RWPE1 (cell line): ENCODE measurements at regions of chr1 and their contacts with region 1.

Region 1: GRCh38 chr1:94045465-94046056 is 75.4 kb downstream of the ABCA4 start:
- DNase-seq: peak; percentile 95
- H3K27ac ChIP-seq: peak overlapping the region; percentile 69
- CTCF ChIP-seq: peak; percentile 81

Region 2: GRCh38 chr1:94061513-94062443 is 16.2 kb after region 1 on chr1:
- CTCF ChIA-PET with region 1: interaction called, 14 read pairs
- POLR2A ChIA-PET with region 1: no interaction called
- DNase-seq: peak; percentile 88
- H3K27ac ChIP-seq: no peak overlapping the region
- CTCF ChIP-seq: peak; percentile 77

Region 3: DNA sequence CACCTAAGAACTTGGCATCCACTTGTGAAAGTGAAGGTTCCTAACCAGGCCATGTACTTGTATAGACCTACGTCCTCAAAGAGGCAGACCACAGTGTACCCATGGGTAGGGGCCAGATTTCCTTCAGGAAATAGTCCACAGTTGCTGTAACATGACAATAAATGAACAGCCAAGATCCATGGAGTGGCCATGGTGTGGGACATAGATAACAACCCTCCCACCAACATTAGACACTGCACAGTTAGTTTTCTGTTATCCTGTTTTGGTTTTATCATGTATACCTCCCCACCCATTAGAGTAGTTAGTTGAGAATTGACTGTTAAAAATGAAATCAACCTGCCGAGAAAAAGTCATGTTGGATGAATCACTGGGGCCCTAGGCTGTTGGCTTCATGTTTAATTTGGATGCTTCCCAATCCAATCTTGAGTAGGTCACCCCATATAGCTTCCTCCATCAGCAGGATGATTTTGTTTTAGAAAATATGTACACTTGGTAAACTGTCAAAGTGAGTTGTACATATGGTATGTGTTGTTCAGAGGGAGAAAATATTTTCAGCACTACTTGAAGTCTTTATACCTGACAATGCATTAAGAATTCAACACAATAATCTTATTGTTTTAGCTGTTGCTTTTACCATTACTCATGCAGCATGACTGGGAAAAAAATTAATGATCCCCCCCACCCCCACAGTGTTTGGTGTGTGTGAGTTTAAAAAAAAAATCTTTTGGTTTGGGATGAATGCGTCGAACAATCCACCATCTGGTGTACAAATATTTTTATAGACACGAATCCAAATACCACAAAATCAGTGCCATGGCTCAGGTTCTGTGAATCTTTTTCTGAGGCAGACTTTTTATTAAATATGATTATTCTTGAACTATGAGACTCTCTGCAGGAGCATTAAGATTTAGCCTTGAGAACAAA is 280.1 kb after region 1 on chr1:
- CTCF ChIA-PET with region 1: interaction called, 10 read pairs
- POLR2A ChIA-PET with region 1: no interaction called
- DNase-seq: peak; percentile 94
- H3K27ac ChIP-seq: peak overlapping the region; percentile 95
- CTCF ChIP-seq: no peak

Region 4: GRCh38 chr1:94463765-94464330 is 418.3 kb after region 1 on chr1:
- CTCF ChIA-PET with region 1: interaction called, 12 read pairs
- POLR2A ChIA-PET with region 1: no interaction called
- DNase-seq: peak; percentile 16
- H3K27ac ChIP-seq: no peak overlapping the region
- CTCF ChIP-seq: peak; percentile 45